Body of pancreas (tissue), 4 donors: ENCODE measurements at regions of chr6 and their contacts with region 1.

Region 1: GRCh38 chr6:132768051-132768517 is 10.4 kb upstream of the VNN2 start:
- DNase-seq: peak; percentile 38 to 67 (median 54)
- ATAC-seq: peak; percentile 90
- H3K4me3 ChIP-seq: no peak overlapping the region
- H3K27ac ChIP-seq: no peak overlapping the region
- H3K4me1 ChIP-seq: peaks cover 13% of the 10 kb centered on the region
- H3K27me3 ChIP-seq: no peaks in the 10 kb centered on the region
- CTCF ChIP-seq: peak; percentile 51 to 99 (median 72)
- POLR2A ChIP-seq: no peak

Region 2: DNA sequence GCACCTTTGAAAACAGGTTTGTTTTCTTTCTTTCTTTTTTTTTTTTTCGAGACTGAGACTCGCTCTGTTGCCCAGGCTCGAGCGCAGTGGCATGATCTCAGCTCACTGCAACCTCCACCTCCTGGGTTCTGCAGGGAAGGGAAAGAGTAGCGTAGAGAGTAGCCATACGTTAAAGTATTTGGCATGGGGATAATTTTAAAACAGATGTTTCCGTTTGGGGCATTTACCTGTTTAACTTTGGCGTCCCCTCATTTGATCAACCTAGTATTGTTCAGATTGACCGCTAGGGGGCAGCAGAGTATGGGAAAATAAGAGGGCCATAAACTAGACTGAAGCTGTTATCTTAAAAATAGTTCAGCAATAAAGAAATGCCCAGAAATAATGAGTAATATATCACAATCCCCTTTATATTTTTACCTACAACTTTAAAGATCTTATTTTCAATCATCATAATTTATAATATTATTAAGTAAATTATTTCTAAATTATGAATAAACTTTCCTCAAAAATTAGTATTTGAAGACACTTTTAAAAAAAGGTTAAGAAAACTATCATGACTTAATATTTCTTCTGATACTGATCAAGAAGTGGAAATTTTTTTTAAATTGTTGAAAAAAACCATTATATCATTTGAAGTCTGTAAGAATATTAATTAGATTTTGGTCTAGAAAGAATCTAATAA is 237.7 kb before region 1 on chr6:
- intact Hi-C with region 1: loop called (anchors 10 kb)
- DNase-seq: peak; percentile 61 to 68 (median 64)
- ATAC-seq: peak; percentile 85
- H3K4me3 ChIP-seq: peak overlapping the region in 1 of 2 donors; percentile 3
- H3K27ac ChIP-seq: no peak overlapping the region
- H3K4me1 ChIP-seq: no peaks in the 10 kb centered on the region
- H3K27me3 ChIP-seq: no peaks in the 10 kb centered on the region
- CTCF ChIP-seq: peak; percentile 68 to 81 (median 79)
- POLR2A ChIP-seq: no peak

Region 3: GRCh38 chr6:132813173-132813856 is 45.2 kb after region 1 on chr6:
- intact Hi-C with region 1: no loop called
- DNase-seq: peak; percentile 35 to 53 (median 48)
- ATAC-seq: peak; percentile 10
- H3K4me3 ChIP-seq: peak overlapping the region; percentile 33 to 73
- H3K27ac ChIP-seq: peak overlapping the region; percentile 87 to 96 (median 90)
- H3K4me1 ChIP-seq: peaks cover 45% of the 10 kb centered on the region
- H3K27me3 ChIP-seq: no peaks in the 10 kb centered on the region
- CTCF ChIP-seq: no peak
- POLR2A ChIP-seq: peak in 2 of 3 donors; percentile 49 to 62